AG04450 (cell line): ENCODE measurements at regions of chr5 and their contacts with region 1.

Region 1: GRCh38 chr5:54944364-54944763 is 41.0 kb downstream of the ESM1 start:
- DNase-seq: peak; percentile 20
- H3K4me3 ChIP-seq: no peak overlapping the region
- H3K27ac ChIP-seq: no peak overlapping the region
- H3K27me3 ChIP-seq: peaks cover 13% of the 10 kb centered on the region
- CTCF ChIP-seq: peak; percentile 77

Region 2: DNA sequence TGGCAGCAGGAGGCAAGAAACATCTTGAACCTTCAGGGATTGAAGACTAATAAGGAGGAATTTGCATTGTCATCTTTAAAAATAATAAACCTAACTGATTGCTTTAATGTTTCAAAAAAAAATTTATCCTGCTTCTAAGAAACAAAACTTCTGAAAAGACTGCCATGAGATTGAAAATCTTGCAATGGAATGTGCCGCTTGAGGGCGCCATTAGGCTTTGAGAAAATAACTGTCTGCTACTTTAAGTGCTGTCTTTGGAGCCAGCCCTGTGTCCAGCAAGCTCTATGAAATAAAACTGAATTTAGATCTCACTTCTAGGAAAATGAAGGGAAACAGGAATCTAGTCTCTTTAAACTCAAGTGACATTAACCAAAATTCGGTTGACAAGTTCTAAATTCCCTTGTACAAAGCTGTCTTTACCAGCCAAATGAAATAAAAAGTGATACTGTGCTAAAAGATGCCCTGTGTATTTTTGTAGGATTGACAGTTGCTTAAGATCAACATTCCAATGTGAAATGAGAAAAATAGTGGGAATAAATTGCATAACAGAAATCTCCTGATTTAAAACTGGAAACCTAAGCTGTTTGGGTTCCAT is 38.3 kb before region 1 on chr5:
- CTCF ChIA-PET with region 1: interaction called, 22 read pairs
- POLR2A ChIA-PET with region 1: no interaction called
- DNase-seq: peak; percentile 59
- H3K4me3 ChIP-seq: no peak overlapping the region
- H3K27ac ChIP-seq: no peak overlapping the region
- H3K27me3 ChIP-seq: no peaks in the 10 kb centered on the region
- CTCF ChIP-seq: peak; percentile 79

Region 3: GRCh38 chr5:54932789-54933188 is 11.6 kb before region 1 on chr5:
- CTCF ChIA-PET with region 1: interaction called, 12 read pairs
- POLR2A ChIA-PET with region 1: no interaction called
- DNase-seq: no peak
- H3K4me3 ChIP-seq: no peak overlapping the region
- H3K27ac ChIP-seq: no peak overlapping the region
- H3K27me3 ChIP-seq: peaks cover 33% of the 10 kb centered on the region
- CTCF ChIP-seq: no peak

Region 4: GRCh38 chr5:54969856-54970828 is 25.8 kb after region 1 on chr5:
- CTCF ChIA-PET with region 1: interaction called, 14 read pairs
- POLR2A ChIA-PET with region 1: no interaction called
- DNase-seq: no peak
- H3K4me3 ChIP-seq: no peak overlapping the region
- H3K27ac ChIP-seq: no peak overlapping the region
- H3K27me3 ChIP-seq: peaks cover 11% of the 10 kb centered on the region
- CTCF ChIP-seq: no peak

Region 5: GRCh38 chr5:55037046-55037771 is 92.8 kb after region 1 on chr5:
- CTCF ChIA-PET with region 1: interaction called, 22 read pairs
- POLR2A ChIA-PET with region 1: no interaction called
- DNase-seq: no peak
- H3K4me3 ChIP-seq: no peak overlapping the region
- H3K27ac ChIP-seq: no peak overlapping the region
- H3K27me3 ChIP-seq: no peaks in the 10 kb centered on the region
- CTCF ChIP-seq: no peak

Region 6: DNA sequence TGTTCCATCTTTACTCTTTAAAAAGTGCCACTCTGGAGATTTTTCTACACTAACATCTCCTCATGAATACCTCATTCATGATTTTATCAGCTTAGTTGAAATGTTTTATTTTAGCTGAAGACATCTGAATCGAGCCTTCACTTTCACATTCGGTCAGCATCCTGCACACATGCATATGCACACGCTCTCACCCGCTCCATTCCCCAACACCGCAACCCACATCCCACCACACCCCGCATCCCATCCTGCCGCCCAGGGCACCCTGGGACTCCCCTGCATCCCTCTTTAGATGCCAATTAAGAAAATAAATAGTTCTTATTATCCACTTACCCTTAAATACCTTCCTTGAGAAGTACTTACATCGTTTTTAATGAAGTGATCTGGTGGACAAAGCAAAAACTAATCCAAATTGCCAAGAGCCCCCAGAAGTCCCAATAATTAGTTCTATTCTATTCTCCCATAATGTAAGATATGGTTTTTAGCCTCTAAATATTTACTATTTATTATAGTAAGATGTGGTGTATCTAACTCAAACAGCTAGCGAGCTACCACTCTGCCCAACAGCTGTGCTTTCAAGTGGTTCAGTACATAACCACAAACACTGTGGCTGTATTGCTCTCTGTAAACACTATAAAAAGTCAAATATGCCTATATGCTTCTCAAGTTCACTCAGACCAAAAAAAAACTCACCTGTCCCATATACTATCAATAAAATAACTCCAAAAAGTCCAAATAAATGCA is 117.8 kb after region 1 on chr5:
- CTCF ChIA-PET with region 1: no interaction called
- POLR2A ChIA-PET with region 1: no interaction called
- DNase-seq: no peak
- H3K4me3 ChIP-seq: no peak overlapping the region
- H3K27ac ChIP-seq: no peak overlapping the region
- H3K27me3 ChIP-seq: peaks cover 2% of the 10 kb centered on the region
- CTCF ChIP-seq: no peak

Region 7: DNA sequence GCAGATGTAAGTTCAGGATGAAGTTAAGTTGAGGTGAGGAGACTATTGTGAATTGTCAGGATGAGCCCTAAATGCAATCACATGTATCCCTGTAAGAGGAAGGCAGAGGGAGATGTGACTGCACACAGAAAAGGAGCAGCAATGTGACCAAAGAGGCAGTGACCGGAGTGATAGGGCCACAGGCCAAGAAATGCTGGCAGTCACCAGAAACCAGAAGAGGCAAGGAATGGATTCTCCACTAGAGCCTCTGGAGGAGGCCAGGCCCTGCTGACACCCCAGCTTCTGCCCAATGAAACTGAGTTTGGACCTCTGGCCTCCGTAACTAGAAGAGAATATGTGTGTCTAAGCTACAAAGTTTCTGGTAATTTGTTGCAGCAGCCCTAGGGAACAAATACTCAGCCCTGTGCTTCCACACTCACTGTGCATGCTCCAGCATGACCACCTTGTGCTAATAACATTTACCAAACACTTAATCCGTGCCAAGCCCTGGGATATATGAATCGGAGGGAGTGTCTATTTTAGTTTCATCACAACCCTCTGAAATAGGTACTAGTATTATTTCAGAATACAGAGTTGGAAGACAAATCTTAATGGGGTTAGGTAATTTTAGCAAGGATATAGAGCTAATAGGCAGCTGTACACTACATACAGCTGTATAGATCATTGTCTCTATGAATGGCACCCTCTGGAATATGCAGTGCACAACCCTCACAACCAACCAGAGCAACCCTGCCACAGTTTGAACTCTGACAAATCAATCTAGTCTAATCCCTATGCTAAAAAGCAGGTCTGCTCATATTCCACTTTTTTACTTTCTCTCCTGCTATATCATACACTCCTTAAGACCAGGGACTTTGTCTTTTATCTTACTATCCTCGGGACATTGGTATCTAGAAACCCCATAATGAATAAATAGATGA is 207.8 kb after region 1 on chr5:
- CTCF ChIA-PET with region 1: interaction called, 17 read pairs
- POLR2A ChIA-PET with region 1: no interaction called
- DNase-seq: peak; percentile 55
- H3K4me3 ChIP-seq: no peak overlapping the region
- H3K27ac ChIP-seq: no peak overlapping the region
- H3K27me3 ChIP-seq: no peaks in the 10 kb centered on the region
- CTCF ChIP-seq: no peak